ENCODE measurements at regions of chr5 and their contacts with region 1.

Region 1: DNA sequence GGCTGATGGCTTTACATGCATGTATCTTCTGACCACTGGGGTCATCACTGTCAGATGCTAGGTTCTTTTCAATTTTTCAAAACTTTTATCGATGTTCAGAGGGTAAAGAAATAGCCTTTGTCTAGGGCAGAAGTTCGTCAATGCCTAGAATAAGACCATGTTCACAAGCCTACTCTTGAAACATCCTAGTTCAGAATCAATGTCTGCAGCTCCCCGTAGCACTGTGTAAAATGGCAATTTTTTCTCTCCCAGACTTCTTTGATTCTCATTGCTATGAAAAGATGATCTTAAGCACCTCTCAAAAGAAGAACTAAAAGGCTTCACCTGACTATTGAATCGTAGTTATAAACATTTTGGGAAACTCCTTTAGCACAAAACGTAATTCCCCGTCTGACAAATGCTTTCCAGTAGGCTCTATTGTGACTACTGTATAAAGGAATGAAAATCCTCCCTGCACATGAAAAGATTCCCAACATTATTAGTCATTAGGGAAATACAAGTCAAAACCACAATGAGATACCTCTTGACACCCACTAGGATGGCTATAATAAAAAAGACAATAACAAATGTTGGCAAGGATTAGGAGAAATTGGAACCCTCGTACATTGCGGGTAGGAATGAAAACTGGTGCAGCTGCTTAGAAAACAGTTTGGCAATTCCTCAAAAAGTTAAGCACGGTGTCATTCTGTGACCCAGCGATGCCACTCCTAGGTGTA is 263.5 kb downstream of the ARHGAP26 start:
- DNase-seq: peak; percentile 90
- ATAC-seq: peak; percentile 85
- H3K4me3 ChIP-seq: no peak overlapping the region
- H3K27ac ChIP-seq: peak overlapping the region; percentile 89
- H3K4me1 ChIP-seq: peaks cover 39% of the 10 kb centered on the region
- H3K27me3 ChIP-seq: no peaks in the 10 kb centered on the region
- CTCF ChIP-seq: no peak

Region 2: DNA sequence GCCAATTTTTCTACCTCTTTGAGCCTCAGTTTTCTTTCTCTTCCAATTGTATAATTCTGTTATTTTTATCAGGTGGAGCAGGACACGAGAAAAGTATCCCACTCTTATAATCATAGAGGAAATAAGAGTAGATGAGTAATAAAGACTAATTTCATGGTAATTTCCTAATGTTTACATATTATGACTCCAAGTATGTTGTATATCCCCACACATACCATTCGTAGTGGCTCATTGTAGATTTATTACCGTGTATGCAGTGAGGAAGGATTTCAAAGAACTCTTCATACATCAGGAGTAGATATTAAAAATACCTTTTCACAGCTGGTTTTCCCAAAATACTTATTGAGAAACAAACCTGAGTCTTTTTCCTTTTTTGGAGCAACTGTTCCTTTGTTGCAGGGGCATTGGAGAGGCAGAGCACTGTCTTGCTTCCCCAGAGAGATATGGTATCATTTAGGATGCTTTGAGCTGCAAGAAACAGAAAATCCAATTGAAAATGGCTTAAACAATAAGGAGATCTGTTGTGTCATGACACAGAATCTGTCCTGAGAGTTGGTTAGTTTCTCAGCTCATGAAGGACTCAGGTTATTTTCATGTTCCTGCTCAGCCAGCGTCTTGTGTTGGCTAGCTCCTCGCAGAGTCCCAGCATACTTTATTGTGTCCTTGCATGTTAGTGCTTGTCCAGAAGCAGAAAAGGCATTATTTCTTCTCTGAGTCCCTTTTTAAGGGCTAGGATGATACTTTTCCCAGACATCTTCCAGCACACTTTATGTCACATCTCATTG is 27.7 kb after region 1 on chr5:
- CTCF ChIA-PET with region 1: no interaction called
- POLR2A ChIA-PET with region 1: no interaction called
- intact Hi-C with region 1: loop called (anchors 1 kb)
- DNase-seq: peak; percentile 84
- ATAC-seq: peak; percentile 82
- H3K4me3 ChIP-seq: peak overlapping the region; percentile 27; the same call in 1 of the 2 replicates
- H3K27ac ChIP-seq: peak overlapping the region; percentile 92
- H3K4me1 ChIP-seq: peaks cover 58% of the 10 kb centered on the region
- H3K27me3 ChIP-seq: no peaks in the 10 kb centered on the region
- CTCF ChIP-seq: no peak

Region 3: GRCh38 chr5:143086908-143087637 is 53.4 kb after region 1 on chr5:
- CTCF ChIA-PET with region 1: no interaction called
- POLR2A ChIA-PET with region 1: no interaction called
- intact Hi-C with region 1: loop called (anchors 2 kb)
- DNase-seq: peak; percentile 82
- ATAC-seq: peak; percentile 83
- H3K4me3 ChIP-seq: no peak overlapping the region
- H3K27ac ChIP-seq: peak overlapping the region; percentile 94
- H3K4me1 ChIP-seq: peaks cover 34% of the 10 kb centered on the region
- H3K27me3 ChIP-seq: no peaks in the 10 kb centered on the region
- CTCF ChIP-seq: no peak

Region 4: DNA sequence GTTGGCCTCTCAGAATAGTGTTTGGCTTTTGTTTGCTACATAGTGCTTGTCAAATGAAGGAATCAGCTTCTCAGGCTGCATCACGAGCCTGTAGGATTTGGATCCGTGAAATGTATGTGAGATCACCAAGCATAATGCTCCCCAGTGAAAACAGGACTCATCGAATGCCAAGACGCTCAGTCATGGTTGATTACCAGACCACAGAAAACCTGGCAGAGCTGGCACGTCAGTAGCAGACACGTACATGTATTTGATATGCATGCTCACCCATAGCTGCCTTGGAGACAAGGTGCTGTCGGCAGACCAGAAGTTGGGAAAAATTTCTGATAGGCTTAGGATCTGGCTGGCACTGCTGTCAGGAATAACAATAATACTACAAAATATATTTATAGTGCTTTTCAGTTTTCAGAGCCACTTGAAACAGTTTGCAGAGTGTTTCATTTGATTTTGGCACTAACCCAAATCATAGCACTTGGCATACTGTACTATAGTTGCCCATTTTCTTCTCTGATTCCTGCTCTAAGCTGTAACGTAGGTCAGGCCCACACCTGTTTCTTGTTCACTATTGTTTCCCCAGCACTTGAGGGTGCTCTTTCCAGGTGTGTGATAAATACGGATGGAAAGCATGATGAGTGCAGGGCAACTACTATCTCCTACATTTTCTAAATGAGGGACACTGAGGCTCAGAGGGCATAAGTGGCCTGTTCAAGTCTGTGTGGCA is 143.7 kb after region 1 on chr5:
- CTCF ChIA-PET with region 1: no interaction called
- POLR2A ChIA-PET with region 1: no interaction called
- intact Hi-C with region 1: loop called (anchors 2 kb)
- DNase-seq: peak; percentile 95
- ATAC-seq: peak; percentile 98
- H3K4me3 ChIP-seq: no peak overlapping the region
- H3K27ac ChIP-seq: peak overlapping the region; percentile 83
- H3K4me1 ChIP-seq: peaks cover 22% of the 10 kb centered on the region
- H3K27me3 ChIP-seq: no peaks in the 10 kb centered on the region
- CTCF ChIP-seq: no peak

Measured in PC-3 (cell line).